CD4-positive, alpha-beta memory T cell (primary cell): ENCODE measurements at regions of chr14 and their contacts with region 1.

Region 1: DNA sequence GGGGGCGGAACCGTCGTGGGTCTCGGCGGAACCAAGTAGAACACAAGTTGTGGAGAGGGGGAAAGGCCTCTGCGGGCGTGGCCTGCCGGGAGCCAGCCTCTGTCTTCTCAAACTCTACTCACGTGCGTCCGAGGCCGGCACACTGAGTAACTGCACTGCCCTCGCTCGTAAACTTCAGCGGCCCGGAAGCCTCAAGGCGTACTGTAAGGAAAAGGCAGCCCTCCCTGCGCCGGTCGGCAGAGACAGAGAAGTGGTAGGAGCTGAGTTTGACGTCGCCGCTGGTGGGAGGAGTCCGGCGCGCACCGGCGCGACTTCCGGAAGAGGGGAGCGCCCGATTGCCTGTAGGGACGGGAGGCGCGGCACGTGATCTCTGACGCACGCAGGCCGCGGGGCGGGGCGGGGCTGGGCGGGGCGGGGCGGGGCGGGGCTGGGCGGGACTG is at the start of gene FBXO33:
- DNase-seq: peak; percentile 97 to 99 (median 98)
- H3K4me3 ChIP-seq: peak within 1 kb of the TSS; percentile 88 to 97
- H3K4me3 Mint-ChIP-seq: peak within 1 kb of the TSS; percentile 99 to 100 (median 100)
- H3K27ac ChIP-seq: peak within 1 kb of the TSS; percentile 91
- H3K27ac Mint-ChIP-seq: peak within 1 kb of the TSS; percentile 100
- H3K4me1 ChIP-seq: peaks cover 47% of the 10 kb centered on the region
- H3K4me1 Mint-ChIP-seq: peaks cover 32 to 56% (median 38%) of the 10 kb centered on the region in 4 donors
- H3K27me3 ChIP-seq: no peaks in the 10 kb centered on the region
- H3K27me3 Mint-ChIP-seq: peaks cover 0 to 2% of the 10 kb centered on the region in 2 donors
- total RNA-seq, gene FBXO33: 18.0 to 21.5 TPM

Region 2: DNA sequence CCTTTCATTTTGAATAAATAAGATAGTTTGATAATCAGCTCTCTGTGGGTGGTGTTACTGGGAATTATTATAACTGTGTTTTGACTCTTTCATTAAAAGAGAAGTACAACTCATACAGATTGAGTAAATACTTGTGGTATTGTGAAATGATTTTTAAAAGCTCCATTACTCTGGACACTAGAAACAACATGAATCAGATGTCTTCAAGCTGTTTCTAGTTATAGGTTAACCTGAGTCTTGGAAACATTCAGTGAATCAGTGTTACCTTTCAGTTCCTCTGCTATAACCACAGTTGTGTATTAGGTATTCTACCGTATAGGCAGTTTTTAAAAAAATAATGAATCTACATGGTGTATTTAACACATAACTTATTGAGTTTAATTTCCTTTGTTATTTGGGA is 1352.9 kb before region 1 on chr14:
- CTCF ChIA-PET with region 1: no interaction called
- POLR2A ChIA-PET with region 1: no interaction called
- intact Hi-C with region 1: loop called (anchors 10 kb)
- DNase-seq: no peak
- H3K4me3 ChIP-seq: no peak overlapping the region
- H3K4me3 Mint-ChIP-seq: peak overlapping the region in 6 of 8 donors; percentile 10 to 86 (median 76)
- H3K27ac ChIP-seq: peak overlapping the region; percentile 6
- H3K27ac Mint-ChIP-seq: peak overlapping the region; percentile 82 to 96 (median 91)
- H3K4me1 ChIP-seq: peaks cover 57% of the 10 kb centered on the region
- H3K4me1 Mint-ChIP-seq: peaks cover 46 to 75% (median 59%) of the 10 kb centered on the region in 4 donors
- H3K27me3 ChIP-seq: no peaks in the 10 kb centered on the region
- H3K27me3 Mint-ChIP-seq: no peaks in the 10 kb centered on the region

Region 3: DNA sequence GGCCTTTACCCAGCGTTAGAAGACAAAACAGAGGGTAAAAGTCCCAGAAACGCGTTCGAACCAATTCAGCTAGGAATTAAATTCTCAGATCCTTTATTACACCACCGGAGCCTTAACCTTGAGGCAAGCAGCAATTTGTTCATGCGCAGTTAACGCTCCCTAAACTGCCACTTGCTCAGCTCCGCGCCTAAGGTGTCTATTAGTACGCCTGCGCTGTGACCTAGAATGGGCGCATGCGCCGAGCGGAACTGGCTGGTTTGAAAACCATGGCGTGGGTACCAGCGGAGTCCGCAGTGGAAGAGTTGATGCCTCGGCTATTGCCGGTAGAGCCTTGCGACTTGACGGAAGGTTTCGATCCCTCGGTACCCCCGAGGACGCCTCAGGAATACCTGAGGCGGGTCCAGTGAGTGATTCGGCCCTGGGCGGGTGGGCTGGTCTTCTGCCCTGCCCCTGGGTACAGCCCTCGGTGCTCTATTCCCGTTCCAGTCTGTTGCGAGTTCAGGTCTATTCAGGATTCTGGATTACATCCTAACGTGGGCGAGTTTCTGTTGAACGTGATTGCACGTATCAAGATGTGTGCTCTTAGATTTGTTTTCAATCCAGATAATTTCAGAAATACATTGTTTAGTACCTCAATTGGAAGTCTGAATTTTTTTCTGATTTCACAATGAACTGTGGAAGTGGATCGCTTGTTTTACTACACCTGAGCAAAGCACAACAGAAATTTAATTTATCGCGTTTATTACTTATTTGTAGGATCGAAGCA is 317.9 kb before region 1 on chr14 and contains the start of gene GEMIN2:
- CTCF ChIA-PET with region 1: no interaction called
- POLR2A ChIA-PET with region 1: interaction called, 46 read pairs
- intact Hi-C with region 1: loop called (anchors 1 kb)
- DNase-seq: peak; percentile 92 to 95 (median 94)
- H3K4me3 ChIP-seq: peak within 1 kb of the TSS; percentile 66 to 81
- H3K4me3 Mint-ChIP-seq: peak within 1 kb of the TSS; percentile 92 to 99 (median 97)
- H3K27ac ChIP-seq: peak within 1 kb of the TSS; percentile 80
- H3K27ac Mint-ChIP-seq: peak within 1 kb of the TSS; percentile 93 to 99 (median 97)
- H3K4me1 ChIP-seq: peaks cover 13% of the 10 kb centered on the region
- H3K4me1 Mint-ChIP-seq: peaks cover 12 to 25% (median 17%) of the 10 kb centered on the region in 4 donors
- H3K27me3 ChIP-seq: no peaks in the 10 kb centered on the region
- H3K27me3 Mint-ChIP-seq: peaks cover 2 to 6% of the 10 kb centered on the region in 2 donors
- total RNA-seq, gene GEMIN2: 13.4 to 16.9 TPM

Region 4: GRCh38 chr14:39174560-39175444 is 257.4 kb before region 1 on chr14 and contains the start of gene PNN:
- CTCF ChIA-PET with region 1: interaction called, 4 read pairs
- POLR2A ChIA-PET with region 1: interaction called, 61 read pairs
- intact Hi-C with region 1: loop called (anchors 1 kb)
- DNase-seq: peak; percentile 97 to 100 (median 99)
- H3K4me3 ChIP-seq: peak within 1 kb of the TSS; percentile 77 to 92
- H3K4me3 Mint-ChIP-seq: peak within 1 kb of the TSS; percentile 95 to 99 (median 97)
- H3K27ac ChIP-seq: peak within 1 kb of the TSS; percentile 98
- H3K27ac Mint-ChIP-seq: peak within 1 kb of the TSS; percentile 97 to 100 (median 98)
- H3K4me1 ChIP-seq: peaks cover 28% of the 10 kb centered on the region
- H3K4me1 Mint-ChIP-seq: peaks cover 18 to 54% (median 40%) of the 10 kb centered on the region in 4 donors
- H3K27me3 ChIP-seq: no peaks in the 10 kb centered on the region
- H3K27me3 Mint-ChIP-seq: no peaks in the 10 kb centered on the region
- total RNA-seq, gene PNN: 86.0 to 93.8 TPM

Region 5: DNA sequence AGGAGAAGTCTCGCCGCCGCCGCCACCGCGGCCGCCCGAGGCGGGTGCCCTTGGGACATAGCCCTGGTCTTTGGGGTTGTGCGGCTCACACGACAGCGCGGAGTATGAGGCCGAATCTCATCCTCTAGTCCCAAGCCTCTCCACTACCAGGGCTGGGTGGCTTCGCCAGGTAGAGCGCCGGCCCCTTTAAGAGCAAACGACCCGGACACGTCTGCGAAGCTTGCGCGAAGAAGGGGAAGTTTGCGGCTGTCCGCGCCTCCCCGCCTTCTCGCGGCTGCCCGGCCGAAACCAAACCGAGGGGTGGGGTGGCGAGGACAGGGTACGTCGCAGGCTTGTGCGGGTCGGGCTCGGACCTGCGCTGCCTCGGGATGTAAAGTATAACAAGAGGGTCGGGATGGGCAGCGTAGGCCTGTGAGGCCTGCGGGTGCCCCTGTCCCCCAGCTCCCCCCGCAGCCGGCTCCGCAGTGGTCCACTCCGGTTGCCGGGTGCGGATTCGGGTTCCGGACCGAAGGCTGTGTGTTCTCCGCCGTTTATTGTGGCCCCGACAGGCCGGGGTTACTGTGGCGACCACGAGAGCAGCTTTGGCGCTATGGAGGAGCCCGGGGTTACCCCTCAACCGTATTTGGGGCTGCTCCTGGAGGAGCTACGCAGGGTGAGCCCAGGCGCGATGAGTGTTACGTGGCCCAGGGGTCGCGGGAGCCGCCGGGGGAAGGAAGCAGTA is 165.2 kb before region 1 on chr14:
- CTCF ChIA-PET with region 1: interaction called, 3 read pairs
- POLR2A ChIA-PET with region 1: interaction called, 81 read pairs
- intact Hi-C with region 1: loop called (anchors 1 kb)
- DNase-seq: peak; percentile 75 to 81 (median 78)
- H3K4me3 ChIP-seq: peak overlapping the region; percentile 85 to 94
- H3K4me3 Mint-ChIP-seq: peak overlapping the region; percentile 77 to 98 (median 97)
- H3K27ac ChIP-seq: peak overlapping the region; percentile 86
- H3K27ac Mint-ChIP-seq: peak overlapping the region; percentile 91 to 99 (median 97)
- H3K4me1 ChIP-seq: peaks cover 40% of the 10 kb centered on the region
- H3K4me1 Mint-ChIP-seq: peaks cover 32 to 62% (median 49%) of the 10 kb centered on the region in 4 donors
- H3K27me3 ChIP-seq: no peaks in the 10 kb centered on the region
- H3K27me3 Mint-ChIP-seq: no peaks in the 10 kb centered on the region

Region 6: GRCh38 chr14:39499514-39499913 is 67.3 kb after region 1 on chr14:
- CTCF ChIA-PET with region 1: no interaction called
- POLR2A ChIA-PET with region 1: no interaction called
- intact Hi-C with region 1: no loop called
- DNase-seq: no peak
- H3K4me3 ChIP-seq: no peak overlapping the region
- H3K4me3 Mint-ChIP-seq: no peak overlapping the region
- H3K27ac ChIP-seq: no peak overlapping the region
- H3K27ac Mint-ChIP-seq: no peak overlapping the region
- H3K4me1 ChIP-seq: no peaks in the 10 kb centered on the region
- H3K4me1 Mint-ChIP-seq: no peaks in the 10 kb centered on the region
- H3K27me3 ChIP-seq: no peaks in the 10 kb centered on the region
- H3K27me3 Mint-ChIP-seq: no peaks in the 10 kb centered on the region